ENCODE measurements at regions of chr11 and their contacts with region 1.

Region 1: DNA sequence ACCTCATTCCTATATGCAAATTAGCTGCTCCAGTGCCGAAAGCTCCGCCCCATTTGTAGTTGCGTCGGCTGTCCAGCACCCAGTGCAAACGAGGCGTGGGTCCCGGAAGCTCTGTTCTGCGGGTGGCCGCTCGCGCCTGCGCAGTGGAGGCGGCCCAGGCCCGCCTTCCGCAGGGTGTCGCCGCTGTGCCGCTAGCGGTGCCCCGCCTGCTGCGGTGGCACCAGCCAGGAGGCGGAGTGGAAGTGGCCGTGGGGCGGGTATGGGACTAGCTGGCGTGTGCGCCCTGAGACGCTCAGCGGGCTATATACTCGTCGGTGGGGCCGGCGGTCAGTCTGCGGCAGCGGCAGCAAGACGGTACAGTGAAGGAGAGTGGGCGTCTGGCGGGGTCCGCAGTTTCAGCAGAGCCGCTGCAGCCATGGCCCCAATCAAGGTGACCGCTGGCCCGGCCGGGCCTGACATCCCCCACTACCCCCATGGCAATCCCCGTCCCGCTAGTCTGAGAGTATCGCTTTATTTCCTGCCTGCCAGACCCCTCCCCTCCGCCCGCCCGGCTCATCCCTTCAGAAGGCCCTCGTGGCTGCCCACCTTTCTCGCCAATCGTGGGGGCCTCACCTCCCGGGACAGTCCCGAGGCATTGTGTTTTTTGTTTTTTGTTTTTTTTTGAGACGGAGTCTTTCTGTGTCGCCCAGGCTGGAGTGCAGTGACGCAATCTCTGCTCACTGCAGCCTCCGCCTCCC is at the start of gene PRDX5:
- DNase-seq: peak in 1 of 2 experiments; percentile 90
- H3K4me3 ChIP-seq: peak within 1 kb of the TSS; percentile 73 to 80 (median 77)
- H3K27ac ChIP-seq: peak within 1 kb of the TSS; percentile 91
- H3K4me1 ChIP-seq: peaks cover 1 to 12% (median 3%) of the 10 kb centered on the region in 4 experiments; a peak in 6 of 7 replicates
- H3K27me3 ChIP-seq: no peaks in the 10 kb centered on the region
- CTCF ChIP-seq: peak in 1 of 3 experiments; percentile 51; a peak in 2 of 4 replicates
- EP300 ChIP-seq: no peak
- POLR2A ChIP-seq: no peak
- RAD21 ChIP-seq: peak; percentile 39 to 62
- total RNA-seq, gene PRDX5: 201 and 225 TPM in 2 replicates

Region 2: DNA sequence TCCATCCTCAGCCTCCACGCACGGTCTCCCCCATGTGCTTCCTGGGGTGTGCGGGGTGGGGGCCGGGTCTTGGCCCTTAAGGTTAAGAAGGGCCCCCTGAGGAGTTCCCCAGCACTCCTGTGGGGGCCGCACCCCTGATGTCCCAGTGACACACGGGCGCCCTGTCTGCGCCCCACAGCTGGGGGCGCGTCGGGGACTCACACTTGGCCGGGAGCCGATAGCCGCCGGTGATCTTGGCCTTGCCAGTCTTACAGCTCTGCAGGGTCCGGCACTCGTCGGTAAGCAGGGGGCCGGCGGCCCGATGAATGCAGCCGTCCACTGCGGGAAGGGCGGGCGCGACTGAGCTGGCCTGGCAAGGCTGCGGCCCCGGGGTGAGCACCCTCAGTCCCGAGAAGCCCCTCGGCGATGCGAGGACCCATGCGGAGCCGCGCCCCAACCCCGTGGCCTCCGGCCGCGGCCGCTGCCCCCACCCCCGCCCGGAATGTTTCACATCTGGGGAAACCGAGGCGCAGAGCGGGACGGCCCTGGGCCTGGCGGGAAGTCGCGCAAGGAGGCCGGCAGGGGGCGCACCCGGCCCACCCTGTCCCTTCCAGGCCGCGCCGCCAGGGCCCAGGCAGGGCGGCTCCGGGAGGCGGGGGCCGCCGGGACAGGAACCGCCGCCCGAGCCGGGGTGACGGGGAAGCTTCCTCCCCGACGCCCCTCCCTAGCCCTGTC is 317.9 kb before region 1 on chr11:
- CTCF ChIA-PET with region 1: no interaction called
- POLR2A ChIA-PET with region 1: no interaction called
- DNase-seq: peak in 1 of 2 experiments; percentile 91
- H3K4me3 ChIP-seq: peak overlapping the region; percentile 14 to 61 (median 47)
- H3K27ac ChIP-seq: no peak overlapping the region
- H3K4me1 ChIP-seq: peaks cover 2 to 23% (median 12%) of the 10 kb centered on the region in 4 experiments; a peak in 6 of 7 replicates
- H3K27me3 ChIP-seq: peaks cover 5 to 36% (median 24%) of the 10 kb centered on the region in 4 experiments
- CTCF ChIP-seq: peak in 2 of 3 experiments; percentile 57 to 92; a peak in 3 of 4 replicates
- EP300 ChIP-seq: no peak
- POLR2A ChIP-seq: no peak
- RAD21 ChIP-seq: peak; percentile 69 to 84

Region 3: DNA sequence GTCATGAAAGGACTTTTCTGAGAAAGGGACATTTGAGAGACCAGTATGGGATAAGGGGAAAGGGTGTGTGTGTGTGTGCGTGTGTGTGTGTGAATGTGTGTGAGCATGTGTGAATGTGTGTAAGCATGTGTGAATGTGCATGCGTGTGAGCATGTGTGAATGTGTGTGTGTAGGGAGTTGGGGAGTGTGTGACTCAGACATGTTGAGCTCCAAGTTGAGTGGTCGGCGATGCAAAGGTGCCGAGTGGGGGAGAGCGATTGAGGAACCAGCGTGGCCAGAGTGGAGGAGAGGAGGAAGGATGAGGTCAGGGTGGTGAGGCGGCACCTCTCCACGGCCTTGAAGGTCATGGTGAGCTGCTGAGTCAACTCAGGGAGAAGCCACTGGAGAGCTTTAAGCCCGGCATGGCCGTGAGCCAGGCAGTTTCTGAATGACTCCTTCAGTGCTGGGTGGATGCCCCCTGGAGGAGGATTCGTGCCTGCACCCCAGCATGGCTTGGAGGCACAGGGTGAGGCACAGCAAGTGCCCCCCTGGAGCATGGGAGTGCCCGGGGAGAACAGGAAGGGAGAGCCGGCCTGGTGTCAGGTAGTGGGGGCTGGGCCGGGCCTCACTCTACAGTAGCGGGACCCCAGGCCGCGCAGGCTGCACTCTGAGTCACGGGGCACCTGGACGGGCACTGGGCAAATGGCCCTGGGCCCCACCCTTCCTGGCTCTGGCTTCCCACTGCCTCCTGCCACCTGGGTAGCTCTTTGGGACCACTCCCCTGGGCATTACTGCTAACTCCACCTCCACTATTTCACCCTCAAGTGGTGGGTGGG is 13.6 kb after region 1 on chr11:
- CTCF ChIA-PET with region 1: interaction called, 614 read pairs
- POLR2A ChIA-PET with region 1: interaction called, 61 read pairs
- DNase-seq: peak in 1 of 2 experiments; percentile 76
- H3K4me3 ChIP-seq: no peak overlapping the region
- H3K27ac ChIP-seq: no peak overlapping the region
- H3K4me1 ChIP-seq: peaks cover 0 to 9% (median 4%) of the 10 kb centered on the region in 4 experiments; a peak in 6 of 7 replicates
- H3K27me3 ChIP-seq: no peaks in the 10 kb centered on the region
- CTCF ChIP-seq: peak; percentile 47 to 74 (median 71)
- EP300 ChIP-seq: no peak
- POLR2A ChIP-seq: no peak
- RAD21 ChIP-seq: peak; percentile 33 to 55; a peak in 2 of 4 replicates

Measured in H1 (cell line).